ENCODE measurements at regions of chr1 and their contacts with region 1.

Region 1: GRCh38 chr1:7207875-7208646 is 422.8 kb downstream of the CAMTA1 start:
- DNase-seq: no peak
- ATAC-seq: peak; percentile 72
- H3K4me3 ChIP-seq: no peak overlapping the region
- H3K27ac ChIP-seq: no peak overlapping the region
- H3K4me1 ChIP-seq: no peaks in the 10 kb centered on the region
- H3K27me3 ChIP-seq: no peaks in the 10 kb centered on the region; a peak in 1 of 4 replicates
- CTCF ChIP-seq: peak; percentile 55 to 73 (median 63)
- EP300 ChIP-seq: no peak
- POLR2A ChIP-seq: no peak
- RAD21 ChIP-seq: peak; percentile 56

Region 2: GRCh38 chr1:7070389-7071029 is 137.6 kb before region 1 on chr1:
- CTCF ChIA-PET with region 1: no interaction called
- POLR2A ChIA-PET with region 1: no interaction called
- RAD21 ChIA-PET with region 1: no interaction called
- SMC1A ChIA-PET with region 1: no interaction called
- in situ Hi-C with region 1: no loop called
- intact Hi-C with region 1: loop called (anchors 10 kb)
- DNase-seq: peak; percentile 3
- ATAC-seq: peak; percentile 92
- H3K4me3 ChIP-seq: no peak overlapping the region
- H3K27ac ChIP-seq: no peak overlapping the region
- H3K4me1 ChIP-seq: no peaks in the 10 kb centered on the region
- H3K27me3 ChIP-seq: peaks cover 0 to 3% of the 10 kb centered on the region in 2 experiments; a peak in 1 of 4 replicates
- CTCF ChIP-seq: peak; percentile 83 to 93 (median 88)
- EP300 ChIP-seq: no peak
- POLR2A ChIP-seq: no peak
- RAD21 ChIP-seq: peak; percentile 83

Region 3: GRCh38 chr1:7196921-7197320 is 11.1 kb before region 1 on chr1:
- CTCF ChIA-PET with region 1: no interaction called
- POLR2A ChIA-PET with region 1: no interaction called
- RAD21 ChIA-PET with region 1: no interaction called
- SMC1A ChIA-PET with region 1: no interaction called
- in situ Hi-C with region 1: no loop called
- intact Hi-C with region 1: no loop called
- DNase-seq: no peak
- ATAC-seq: no peak
- H3K4me3 ChIP-seq: no peak overlapping the region
- H3K27ac ChIP-seq: no peak overlapping the region
- H3K4me1 ChIP-seq: no peaks in the 10 kb centered on the region
- H3K27me3 ChIP-seq: no peaks in the 10 kb centered on the region
- CTCF ChIP-seq: no peak
- EP300 ChIP-seq: no peak
- POLR2A ChIP-seq: no peak
- RAD21 ChIP-seq: no peak

Region 4: DNA sequence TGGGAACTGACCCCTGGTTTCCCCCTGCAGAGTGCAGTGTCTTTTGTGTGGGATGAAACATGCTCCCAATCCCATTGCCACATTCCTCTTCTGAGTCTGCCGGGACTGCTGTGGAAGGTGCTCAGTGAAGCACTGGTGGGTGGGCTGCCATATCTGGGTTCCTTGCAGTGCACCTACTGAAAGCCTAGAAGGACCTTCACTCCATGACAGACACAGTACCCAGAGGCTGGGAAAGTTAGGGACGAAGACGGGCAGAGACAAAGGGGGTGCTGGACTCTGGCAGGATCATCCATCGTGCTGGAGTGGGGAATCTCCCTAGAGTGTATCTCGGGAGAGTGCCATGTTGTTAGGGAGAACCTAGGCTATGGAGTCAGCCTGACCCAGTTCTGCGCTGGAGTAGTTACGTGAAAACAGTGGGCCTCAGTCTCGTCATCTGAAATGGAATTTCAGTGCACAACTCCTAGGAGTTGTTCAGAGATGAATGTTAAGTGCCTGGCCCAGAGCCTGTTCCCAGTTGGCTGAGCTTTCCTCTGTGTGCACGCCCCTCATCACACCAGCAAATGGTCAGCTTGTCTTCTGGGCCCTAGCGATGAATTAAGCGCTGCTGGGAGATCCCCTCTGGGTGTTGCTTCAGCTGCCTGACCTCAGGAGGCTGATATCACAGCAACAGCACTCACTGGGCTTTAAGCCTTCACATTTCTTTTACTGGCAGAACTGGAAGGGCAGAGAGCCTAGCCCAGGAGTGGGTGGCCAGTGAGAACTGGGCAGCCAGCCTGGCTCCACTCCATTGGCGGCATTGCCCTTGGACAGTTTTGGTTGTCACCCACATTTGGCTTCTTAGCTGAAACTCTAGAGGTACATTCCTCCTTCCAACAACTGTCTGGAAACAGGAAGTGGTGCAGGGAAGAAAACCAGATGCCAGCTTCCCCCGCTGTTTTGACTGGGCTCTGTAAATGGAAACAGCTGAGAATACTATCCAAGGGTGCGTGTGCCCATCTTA is 83.2 kb after region 1 on chr1:
- CTCF ChIA-PET with region 1: no interaction called
- POLR2A ChIA-PET with region 1: no interaction called
- RAD21 ChIA-PET with region 1: no interaction called
- SMC1A ChIA-PET with region 1: no interaction called
- in situ Hi-C with region 1: no loop called
- intact Hi-C with region 1: no loop called
- DNase-seq: no peak
- ATAC-seq: no peak
- H3K4me3 ChIP-seq: no peak overlapping the region
- H3K27ac ChIP-seq: no peak overlapping the region
- H3K4me1 ChIP-seq: no peaks in the 10 kb centered on the region
- H3K27me3 ChIP-seq: peaks cover 0 to 2% of the 10 kb centered on the region in 2 experiments; a peak in 2 of 4 replicates
- CTCF ChIP-seq: no peak
- EP300 ChIP-seq: no peak
- POLR2A ChIP-seq: no peak
- RAD21 ChIP-seq: no peak

Measured in GM12878 (cell line).